Mammary epithelial cell (primary cell): ENCODE measurements at regions of chr6 and their contacts with region 1.

Region 1: DNA sequence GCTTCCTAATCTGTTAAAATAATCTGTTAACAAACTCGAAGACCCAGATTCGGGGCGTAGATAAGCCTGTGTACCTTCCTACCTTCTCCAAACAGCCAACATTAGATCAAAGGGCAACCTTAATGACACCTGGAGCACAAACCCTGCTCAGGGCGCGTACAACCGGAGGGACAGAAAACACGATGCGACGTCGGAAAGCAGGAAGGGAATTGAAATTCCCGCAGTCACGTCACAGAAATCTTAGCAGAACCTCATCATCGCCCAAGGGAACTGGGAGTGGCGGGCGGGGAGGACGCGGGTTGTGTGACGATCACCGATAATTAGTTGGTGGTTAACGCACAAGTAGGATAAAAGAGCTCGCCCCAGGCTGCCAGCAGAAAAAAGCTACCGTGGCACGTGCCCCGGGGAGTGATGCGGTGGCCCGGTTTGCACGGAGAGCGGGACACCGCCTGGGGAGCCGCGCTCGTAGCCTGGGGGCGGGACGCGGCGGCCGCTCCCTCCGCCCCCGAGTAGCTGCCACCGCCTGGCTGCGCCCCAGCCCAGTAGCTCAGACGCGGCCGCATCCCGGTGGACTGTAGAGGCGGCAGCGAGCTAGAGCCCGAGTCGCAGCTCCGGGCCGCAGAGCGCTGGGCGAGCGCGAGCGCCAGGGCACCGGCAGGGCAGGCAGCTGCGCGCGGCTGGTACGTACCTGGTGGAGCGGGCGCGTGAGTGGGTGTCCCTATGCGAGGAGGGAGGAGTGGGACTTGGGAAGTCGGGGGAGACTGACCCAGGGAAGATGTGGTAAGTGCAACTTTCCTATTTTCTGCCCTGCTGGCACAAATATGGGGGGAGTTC is at the start of gene PKIB:
- DNase-seq: peak; percentile 87
- H3K4me3 ChIP-seq: peak within 1 kb of the TSS; percentile 78 to 88 (median 80)
- H3K27ac ChIP-seq: peak within 1 kb of the TSS; percentile 42
- H3K4me1 ChIP-seq: peaks cover 14% of the 10 kb centered on the region
- H3K27me3 ChIP-seq: no peaks in the 10 kb centered on the region
- CTCF ChIP-seq: peak; percentile 43 to 76
- total RNA-seq, gene PKIB: 1.8 to 24.2 TPM

Region 2: DNA sequence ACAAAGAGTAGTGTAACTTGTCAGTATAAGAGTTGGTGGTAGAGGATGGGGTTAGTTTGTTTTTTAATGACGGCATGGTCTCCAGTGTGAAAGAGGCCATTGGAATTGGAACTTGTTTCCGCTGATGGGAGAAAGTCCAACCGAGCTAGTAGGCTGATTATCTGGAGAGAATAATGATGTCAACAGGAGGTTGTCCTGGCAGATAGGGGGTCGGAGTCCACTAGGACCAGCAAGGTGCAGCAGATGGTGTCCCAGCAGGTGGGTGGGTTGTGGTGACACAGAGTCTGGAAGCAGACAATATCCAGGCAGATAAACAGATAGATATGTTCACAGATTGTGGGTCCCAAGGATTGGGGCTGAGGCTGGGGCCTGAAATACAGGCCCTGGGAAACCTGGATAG is 35.2 kb after region 1 on chr6:
- CTCF ChIA-PET with region 1: no interaction called
- dilution Hi-C with region 1: loop called (anchors 5 kb)
- in situ Hi-C with region 1: no loop called
- intact Hi-C with region 1: no loop called
- DNase-seq: no peak
- H3K4me3 ChIP-seq: no peak overlapping the region
- H3K27ac ChIP-seq: no peak overlapping the region
- H3K4me1 ChIP-seq: peaks cover 32% of the 10 kb centered on the region
- H3K27me3 ChIP-seq: no peaks in the 10 kb centered on the region
- CTCF ChIP-seq: no peak

Region 3: GRCh38 chr6:122673343-122673961 is 63.4 kb after region 1 on chr6:
- CTCF ChIA-PET with region 1: interaction called, 4 read pairs
- dilution Hi-C with region 1: no loop called
- in situ Hi-C with region 1: no loop called
- intact Hi-C with region 1: loop called (anchors 5 kb)
- DNase-seq: peak; percentile 79
- H3K4me3 ChIP-seq: no peak overlapping the region
- H3K27ac ChIP-seq: no peak overlapping the region
- H3K4me1 ChIP-seq: peaks cover 13% of the 10 kb centered on the region
- H3K27me3 ChIP-seq: no peaks in the 10 kb centered on the region
- CTCF ChIP-seq: no peak

Region 4: DNA sequence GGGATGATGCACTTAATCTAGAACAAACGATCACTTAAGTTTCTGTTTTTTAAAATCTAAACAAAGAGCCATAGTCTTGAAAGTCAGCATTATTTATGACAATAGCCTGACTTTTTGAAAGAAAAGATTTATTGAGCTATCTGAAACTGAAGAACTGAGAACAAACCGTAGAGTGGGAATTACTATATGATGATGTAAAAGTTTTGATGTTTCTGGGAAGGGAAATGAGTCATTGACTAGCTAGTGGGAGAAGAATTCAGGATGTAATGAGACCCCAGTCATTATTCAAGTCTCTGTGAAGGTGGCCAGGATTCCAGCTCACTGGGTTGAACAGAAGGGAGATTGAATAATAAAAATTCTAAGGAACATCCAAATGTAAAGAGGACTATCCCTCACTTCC is 86.0 kb after region 1 on chr6:
- CTCF ChIA-PET with region 1: interaction called, 11 read pairs
- dilution Hi-C with region 1: no loop called
- in situ Hi-C with region 1: no loop called
- intact Hi-C with region 1: loop called (anchors 1 kb)
- DNase-seq: peak; percentile 86
- H3K4me3 ChIP-seq: peak overlapping the region in 1 of 3 experiments; percentile 6
- H3K27ac ChIP-seq: peak overlapping the region; percentile 77
- H3K4me1 ChIP-seq: peaks cover 16% of the 10 kb centered on the region
- H3K27me3 ChIP-seq: no peaks in the 10 kb centered on the region
- CTCF ChIP-seq: no peak

Region 5: DNA sequence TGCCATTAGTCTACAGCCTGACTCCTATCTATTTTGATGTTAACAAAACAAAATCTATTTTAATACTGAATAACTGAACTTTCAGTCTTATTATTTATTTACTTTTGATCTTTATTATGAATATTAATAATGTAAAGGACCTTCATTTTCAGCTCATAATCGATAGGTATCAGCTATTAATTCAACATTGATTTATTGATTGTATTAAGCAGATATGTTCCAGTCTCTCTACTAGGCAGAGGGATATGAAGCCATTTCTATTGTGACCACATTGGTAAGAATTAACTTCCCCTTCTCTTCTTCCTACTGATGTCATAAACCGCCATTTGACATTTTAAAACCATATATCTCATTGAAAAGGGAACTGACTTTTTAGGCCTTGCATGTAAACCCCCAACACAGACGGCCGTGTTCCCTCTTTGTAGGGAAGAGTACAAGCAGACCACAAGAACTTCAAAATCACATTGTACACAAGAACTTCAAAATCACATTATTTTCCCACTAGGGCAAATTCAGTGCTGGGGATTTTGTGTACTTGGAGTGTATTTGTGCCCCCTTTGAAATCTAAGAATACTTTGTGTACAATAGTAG is 99.9 kb after region 1 on chr6:
- CTCF ChIA-PET with region 1: no interaction called
- dilution Hi-C with region 1: loop called (anchors 5 kb)
- in situ Hi-C with region 1: no loop called
- intact Hi-C with region 1: no loop called
- DNase-seq: no peak
- H3K4me3 ChIP-seq: no peak overlapping the region
- H3K27ac ChIP-seq: no peak overlapping the region
- H3K4me1 ChIP-seq: peaks cover 6% of the 10 kb centered on the region
- H3K27me3 ChIP-seq: no peaks in the 10 kb centered on the region
- CTCF ChIP-seq: no peak

Region 6: DNA sequence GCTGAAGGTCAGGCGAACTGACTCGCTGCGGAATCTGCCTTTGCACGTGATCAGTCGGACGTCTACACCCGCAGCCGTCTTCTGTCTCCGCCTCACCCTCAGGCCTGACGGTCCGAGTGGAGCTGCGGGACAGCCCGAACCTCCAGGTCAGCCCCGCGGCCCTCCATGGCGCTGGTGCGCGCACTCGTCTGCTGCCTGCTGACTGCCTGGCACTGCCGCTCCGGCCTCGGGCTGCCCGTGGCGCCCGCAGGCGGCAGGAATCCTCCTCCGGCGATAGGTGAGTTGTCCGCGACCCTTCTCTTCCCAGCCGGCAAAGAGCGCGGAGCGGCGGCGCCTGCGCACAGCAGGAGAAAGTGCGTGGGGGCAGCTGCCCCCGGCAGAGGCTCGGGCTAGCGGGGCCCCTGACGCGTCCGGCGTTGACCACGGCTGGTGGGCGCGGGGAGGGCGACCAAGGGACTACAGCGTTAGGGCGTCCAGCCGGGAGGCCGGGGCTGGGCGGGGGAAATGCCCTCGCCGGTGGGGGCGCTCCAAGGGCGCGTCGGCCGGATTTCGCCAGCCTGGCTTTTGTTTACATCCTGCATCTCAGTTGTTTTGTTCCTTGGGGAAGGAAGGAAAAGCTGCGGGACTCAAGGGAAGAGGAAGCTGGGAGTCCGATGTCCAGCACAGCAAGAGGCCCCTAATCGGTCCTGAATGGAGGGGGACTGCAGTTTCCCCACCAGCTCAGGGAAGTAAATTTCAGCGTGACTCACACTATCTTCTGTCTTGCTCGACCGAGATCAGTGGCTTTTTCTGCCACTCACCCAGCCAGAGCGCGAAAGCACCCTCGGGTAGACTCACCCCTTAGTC is 179.3 kb after region 1 on chr6 and contains the start of gene SMPDL3A:
- CTCF ChIA-PET with region 1: no interaction called
- dilution Hi-C with region 1: no loop called
- in situ Hi-C with region 1: no loop called
- intact Hi-C with region 1: loop called (anchors 1 kb)
- DNase-seq: peak; percentile 74
- H3K4me3 ChIP-seq: peak within 1 kb of the TSS; percentile 61 to 71 (median 68)
- H3K27ac ChIP-seq: peak within 1 kb of the TSS; percentile 63
- H3K4me1 ChIP-seq: peaks cover 19% of the 10 kb centered on the region
- H3K27me3 ChIP-seq: no peaks in the 10 kb centered on the region
- CTCF ChIP-seq: peak; percentile 10 to 49
- total RNA-seq, gene SMPDL3A: 4.5 to 7.3 TPM

Region 7: DNA sequence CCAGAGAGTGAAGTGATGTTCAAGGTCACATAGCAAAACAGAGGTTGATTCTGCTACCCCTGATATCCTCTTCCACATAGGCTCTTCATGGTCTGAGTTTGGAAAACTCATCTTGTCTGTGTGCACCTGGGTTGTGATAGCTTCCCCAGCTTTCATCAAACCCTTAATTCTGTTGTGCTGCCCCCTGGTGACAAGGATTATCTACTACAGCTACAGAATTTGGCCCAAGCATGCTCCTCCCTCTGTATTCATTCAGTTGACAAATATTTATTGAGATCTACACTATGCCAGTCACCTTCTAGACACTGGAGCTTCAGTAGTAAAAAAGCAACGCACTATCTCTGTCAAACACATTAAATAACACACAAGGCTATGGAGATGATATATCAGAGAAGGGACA is 229.4 kb after region 1 on chr6:
- CTCF ChIA-PET with region 1: no interaction called
- dilution Hi-C with region 1: no loop called
- in situ Hi-C with region 1: no loop called
- intact Hi-C with region 1: loop called (anchors 1 kb)
- DNase-seq: peak; percentile 48
- H3K4me3 ChIP-seq: no peak overlapping the region
- H3K27ac ChIP-seq: no peak overlapping the region
- H3K4me1 ChIP-seq: no peaks in the 10 kb centered on the region
- H3K27me3 ChIP-seq: no peaks in the 10 kb centered on the region
- CTCF ChIP-seq: peak; percentile 61 to 71